Common myeloid progenitor, CD34-positive (primary cell): ENCODE measurements at regions of chr15 and their contacts with region 1.

Region 1: GRCh38 chr15:78880242-78880533 is 7.5 kb downstream of the MORF4L1 start:
- DNase-seq: no peak
- H3K4me3 ChIP-seq: no peak overlapping the region
- H3K27ac ChIP-seq: no peak overlapping the region
- H3K4me1 ChIP-seq: peaks cover 11 to 31% (median 21%) of the 10 kb centered on the region in 4 experiments
- H3K27me3 ChIP-seq: no peaks in the 10 kb centered on the region

Region 2: GRCh38 chr15:78893538-78893937 is 13.3 kb after region 1 on chr15:
- CTCF ChIA-PET with region 1: interaction called, 19 read pairs
- POLR2A ChIA-PET with region 1: interaction called, 3 read pairs
- DNase-seq: no peak
- H3K4me3 ChIP-seq: no peak overlapping the region
- H3K27ac ChIP-seq: no peak overlapping the region
- H3K4me1 ChIP-seq: no peaks in the 10 kb centered on the region
- H3K27me3 ChIP-seq: no peaks in the 10 kb centered on the region